MCF 10A (cell line): ENCODE measurements at regions of chr3 and their contacts with region 1.

Region 1: DNA sequence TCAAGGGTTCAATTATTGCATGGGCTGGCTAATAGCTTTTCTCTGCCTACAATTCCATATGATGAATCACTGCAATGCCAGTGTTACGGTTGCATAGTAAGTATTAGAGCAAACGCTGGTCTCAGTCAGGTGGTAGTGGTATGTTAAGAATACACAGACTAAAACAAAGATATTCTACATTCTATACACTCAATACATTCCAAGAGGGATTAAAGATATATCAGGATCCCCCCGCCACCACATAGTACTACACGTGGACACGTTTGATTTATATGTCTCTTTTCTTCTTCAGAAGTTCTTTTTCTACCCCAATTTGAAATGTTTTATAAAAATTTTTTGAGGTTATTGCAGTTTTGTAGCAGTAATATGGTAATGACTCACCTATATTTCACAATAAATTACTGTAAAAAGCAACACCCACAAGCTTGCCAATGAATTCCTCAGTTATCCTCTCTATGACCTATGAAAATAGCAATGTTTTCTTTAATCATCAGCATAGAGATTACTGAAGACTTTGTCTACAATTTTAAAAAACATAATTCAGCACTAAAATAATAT is 68.2 kb downstream of the CD200R1L start:
- DNase-seq: peak; percentile 80
- H3K4me3 Mint-ChIP-seq: no peak overlapping the region
- H3K27ac Mint-ChIP-seq: peak overlapping the region; percentile 84
- H3K4me1 Mint-ChIP-seq: peaks cover 37% of the 10 kb centered on the region
- H3K27me3 Mint-ChIP-seq: no peaks in the 10 kb centered on the region
- CTCF ChIP-seq: no peak

Region 2: DNA sequence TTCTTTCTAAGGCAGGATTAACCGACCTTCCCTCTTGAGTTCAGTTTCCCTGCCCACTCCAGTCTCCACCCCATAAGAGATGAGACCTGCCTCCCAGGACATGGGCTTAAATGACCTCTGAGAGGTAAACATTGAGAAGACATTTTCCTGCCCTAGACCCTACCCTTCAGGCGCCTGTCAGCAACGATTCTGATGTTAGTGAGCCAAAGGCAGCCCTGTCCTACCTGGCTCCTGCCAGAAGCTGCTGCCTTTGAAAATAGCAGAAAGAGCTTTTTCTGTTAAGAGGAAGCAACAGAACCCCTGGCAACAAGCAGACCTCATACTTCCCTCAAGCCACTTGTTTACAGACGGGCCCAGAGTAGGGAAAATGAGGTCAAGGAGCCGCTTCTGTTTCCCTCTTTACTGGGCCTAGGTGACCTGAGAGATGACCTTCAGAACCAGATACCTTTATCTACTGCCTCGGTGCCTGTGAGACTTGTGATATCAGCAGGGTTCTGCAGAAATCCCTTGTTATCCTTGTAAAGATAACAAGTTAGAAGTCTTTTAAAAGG is 16.2 kb after region 1 on chr3:
- CTCF ChIA-PET with region 1: no interaction called
- POLR2A ChIA-PET with region 1: interaction called, 17 read pairs
- intact Hi-C with region 1: no loop called
- DNase-seq: no peak
- H3K4me3 Mint-ChIP-seq: no peak overlapping the region
- H3K27ac Mint-ChIP-seq: no peak overlapping the region
- H3K4me1 Mint-ChIP-seq: no peaks in the 10 kb centered on the region
- H3K27me3 Mint-ChIP-seq: no peaks in the 10 kb centered on the region
- CTCF ChIP-seq: no peak